Mammary epithelial cell (primary cell): ENCODE measurements at regions of chr18 and their contacts with region 1.

Region 1: GRCh38 chr18:58529714-58530354 is 99.1 kb downstream of the ALPK2 start:
- DNase-seq: no peak
- H3K4me3 ChIP-seq: no peak overlapping the region
- H3K27ac ChIP-seq: no peak overlapping the region
- H3K4me1 ChIP-seq: peaks cover 8% of the 10 kb centered on the region
- H3K27me3 ChIP-seq: no peaks in the 10 kb centered on the region
- CTCF ChIP-seq: peak; percentile 88 to 93

Region 2: DNA sequence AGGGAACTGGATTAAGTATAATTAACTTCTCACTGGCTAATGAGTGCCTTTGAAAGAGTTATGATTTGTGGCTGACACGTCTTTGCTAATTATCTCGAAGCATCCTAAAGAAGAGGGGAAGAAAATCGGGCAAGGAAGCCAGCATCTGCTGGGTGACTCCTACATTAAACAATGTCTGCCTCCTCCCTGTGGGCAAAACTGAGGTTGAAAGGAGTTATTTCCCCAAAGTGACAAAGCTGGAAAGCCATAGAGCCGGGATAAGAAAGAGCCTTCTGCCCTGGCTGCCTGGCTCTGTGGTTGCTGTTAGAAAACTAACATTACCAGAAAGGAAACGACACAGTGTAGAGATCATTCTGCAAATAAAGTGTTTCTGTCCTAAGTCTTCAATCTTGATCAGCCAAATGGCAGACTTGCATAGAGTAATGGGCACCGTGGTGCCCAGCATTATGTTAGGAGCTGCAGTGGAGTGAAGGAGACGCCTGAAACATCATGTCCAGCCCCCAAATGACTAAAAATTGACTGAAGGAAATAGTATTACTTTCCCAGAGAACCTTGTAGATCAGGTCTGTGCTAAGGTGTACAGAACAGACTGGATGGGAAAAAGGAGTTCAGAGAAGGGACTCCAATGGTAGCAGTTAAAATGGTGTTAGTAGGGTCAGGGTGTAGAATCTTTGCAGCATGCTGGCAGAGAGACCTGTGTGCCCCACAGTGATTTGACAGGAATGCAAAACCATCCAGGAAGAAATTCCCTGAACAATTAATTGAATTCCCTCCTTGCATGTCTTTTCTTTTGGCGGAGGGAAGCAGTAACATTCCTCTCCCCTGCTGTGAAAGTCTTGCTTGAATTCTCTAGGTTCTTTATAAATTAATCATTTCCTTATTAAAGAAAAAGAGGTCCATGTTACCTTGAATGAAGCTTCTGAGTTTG is 54.6 kb after region 1 on chr18:
- CTCF ChIA-PET with region 1: no interaction called
- dilution Hi-C with region 1: no loop called
- in situ Hi-C with region 1: no loop called
- intact Hi-C with region 1: loop called (anchors 1 kb)
- DNase-seq: peak; percentile 60
- H3K4me3 ChIP-seq: no peak overlapping the region
- H3K27ac ChIP-seq: peak overlapping the region; percentile 1
- H3K4me1 ChIP-seq: peaks cover 30% of the 10 kb centered on the region
- H3K27me3 ChIP-seq: no peaks in the 10 kb centered on the region
- CTCF ChIP-seq: peak in 1 of 2 donors; percentile 30

Region 3: DNA sequence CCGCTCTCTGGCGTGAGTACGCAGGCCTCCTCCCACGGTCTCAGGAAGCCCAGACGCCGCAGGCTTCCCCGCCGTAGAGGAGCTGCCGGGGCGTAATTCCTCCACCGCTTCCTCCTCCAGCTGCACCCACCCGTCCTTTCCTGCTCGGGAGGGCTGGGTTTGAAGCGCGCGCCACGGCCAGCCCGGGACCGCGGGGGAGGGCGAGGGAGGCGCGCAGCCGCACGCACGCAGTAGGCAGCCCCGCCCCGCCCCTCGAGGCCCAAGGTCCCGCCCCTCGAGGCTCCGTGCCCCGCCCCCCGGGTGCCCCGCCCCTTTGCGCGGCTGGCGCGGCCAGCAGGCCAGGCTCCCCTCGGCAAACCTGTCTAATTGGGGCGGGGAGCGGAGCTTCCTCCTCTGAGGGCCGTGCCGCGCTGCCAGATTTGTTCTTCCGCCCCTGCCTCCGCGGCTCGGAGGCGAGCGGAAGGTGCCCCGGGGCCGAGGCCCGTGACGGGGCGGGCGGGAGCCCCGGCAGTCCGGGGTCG is 141.3 kb after region 1 on chr18 and contains the start of gene MALT1:
- CTCF ChIA-PET with region 1: no interaction called
- dilution Hi-C with region 1: no loop called
- in situ Hi-C with region 1: loop called in 1 of 2 experiments (anchors 10 kb)
- intact Hi-C with region 1: loop called (anchors 2 kb)
- DNase-seq: peak; percentile 89
- H3K4me3 ChIP-seq: peak within 1 kb of the TSS; percentile 75 to 98 (median 85)
- H3K27ac ChIP-seq: peak within 1 kb of the TSS; percentile 92
- H3K4me1 ChIP-seq: peaks cover 50% of the 10 kb centered on the region
- H3K27me3 ChIP-seq: no peaks in the 10 kb centered on the region
- CTCF ChIP-seq: no peak
- total RNA-seq, gene MALT1: 34.2 to 43.0 TPM

Region 4: DNA sequence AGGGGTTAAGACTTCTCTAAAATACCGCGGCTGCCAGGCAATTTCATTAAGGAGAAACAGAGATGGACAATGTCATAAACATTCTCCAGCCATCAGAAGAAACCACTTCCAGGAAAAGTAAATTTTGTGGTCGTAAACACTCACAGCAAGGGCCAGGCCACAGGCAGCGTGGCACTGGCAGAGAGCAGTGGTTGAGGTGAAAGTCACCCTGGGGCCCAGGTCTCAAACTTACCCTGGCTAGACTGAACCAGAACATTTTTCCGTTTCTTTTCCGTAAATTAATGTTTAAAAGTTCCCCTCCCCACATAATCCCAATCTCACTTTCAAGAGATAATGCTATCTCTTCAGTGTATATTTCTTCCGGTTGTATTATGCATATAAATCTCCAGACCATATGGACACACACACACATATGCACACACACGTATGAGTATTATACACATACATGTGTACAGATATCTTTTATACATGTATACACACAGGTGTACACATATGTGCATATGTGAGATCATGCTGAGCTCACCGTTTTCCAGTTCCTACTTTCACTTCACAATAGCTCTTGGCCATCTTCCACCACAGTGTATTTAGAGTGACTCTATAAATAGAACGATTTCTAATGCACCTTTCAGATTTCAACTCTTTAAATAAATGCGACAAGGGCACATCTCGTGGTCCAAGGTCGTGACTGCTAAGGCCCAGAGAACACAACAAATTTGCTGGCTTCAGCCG is 231.6 kb after region 1 on chr18:
- CTCF ChIA-PET with region 1: interaction called, 12 read pairs
- dilution Hi-C with region 1: no loop called
- in situ Hi-C with region 1: loop called (anchors 5 kb)
- intact Hi-C with region 1: loop called (anchors 1 kb)
- DNase-seq: no peak
- H3K4me3 ChIP-seq: no peak overlapping the region
- H3K27ac ChIP-seq: no peak overlapping the region
- H3K4me1 ChIP-seq: no peaks in the 10 kb centered on the region
- H3K27me3 ChIP-seq: no peaks in the 10 kb centered on the region
- CTCF ChIP-seq: no peak

Region 5: GRCh38 chr18:59056706-59057492 is 527.1 kb after region 1 on chr18:
- CTCF ChIA-PET with region 1: no interaction called
- dilution Hi-C with region 1: loop called (anchors 25 kb)
- in situ Hi-C with region 1: no loop called
- intact Hi-C with region 1: loop called (anchors 5 kb)
- DNase-seq: peak; percentile 58
- H3K4me3 ChIP-seq: no peak overlapping the region
- H3K27ac ChIP-seq: no peak overlapping the region
- H3K4me1 ChIP-seq: no peaks in the 10 kb centered on the region
- H3K27me3 ChIP-seq: no peaks in the 10 kb centered on the region
- CTCF ChIP-seq: peak; percentile 92 to 96